GM12878 (cell line): ENCODE measurements at regions of chr14 and their contacts with region 1.

Region 1: DNA sequence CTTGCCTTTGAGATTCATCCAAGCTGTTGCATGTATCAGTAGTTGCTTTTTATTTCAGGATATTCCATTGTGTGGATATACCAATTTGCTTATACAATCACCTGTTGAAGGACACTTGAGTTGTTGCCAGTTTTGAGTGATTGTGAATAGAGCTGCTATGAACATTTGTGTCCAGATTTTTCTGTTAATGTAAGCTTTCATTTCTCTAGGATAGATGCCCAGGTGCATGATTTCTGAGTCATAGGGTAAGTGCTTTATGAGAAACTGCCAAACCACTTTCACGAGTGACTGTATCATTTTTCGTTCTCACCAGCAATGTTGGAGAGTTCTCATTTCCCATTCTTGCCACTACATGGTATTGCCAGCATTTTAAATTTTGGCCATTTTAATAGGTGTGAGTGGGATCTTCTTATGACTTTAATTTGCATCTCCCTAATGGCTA is 434.6 kb upstream of the RGS6 start:
- DNase-seq: peak; percentile 98
- ATAC-seq: peak; percentile 91
- H3K4me3 ChIP-seq: no peak overlapping the region
- H3K27ac ChIP-seq: peak overlapping the region; percentile 94
- H3K4me1 ChIP-seq: peaks cover 43% of the 10 kb centered on the region
- H3K27me3 ChIP-seq: no peaks in the 10 kb centered on the region
- CTCF ChIP-seq: no peak
- EP300 ChIP-seq: peak; percentile 99
- POLR2A ChIP-seq: no peak
- RAD21 ChIP-seq: no peak; the same call in none of the 2 replicates

Region 2: GRCh38 chr14:71355324-71356201 is 142.1 kb before region 1 on chr14:
- CTCF ChIA-PET with region 1: interaction called, 3 read pairs
- POLR2A ChIA-PET with region 1: interaction called, 4 read pairs
- RAD21 ChIA-PET with region 1: interaction called, 8 read pairs
- SMC1A ChIA-PET with region 1: interaction called, 10 read pairs
- in situ Hi-C with region 1: no loop called
- intact Hi-C with region 1: no loop called
- DNase-seq: no peak
- ATAC-seq: peak; percentile 45
- H3K4me3 ChIP-seq: peak overlapping the region; percentile 20; the same call in 1 of the 2 replicates
- H3K27ac ChIP-seq: peak overlapping the region; percentile 52
- H3K4me1 ChIP-seq: peaks cover 38% of the 10 kb centered on the region
- H3K27me3 ChIP-seq: no peaks in the 10 kb centered on the region
- CTCF ChIP-seq: no peak
- EP300 ChIP-seq: no peak
- POLR2A ChIP-seq: no peak
- RAD21 ChIP-seq: no peak

Region 3: DNA sequence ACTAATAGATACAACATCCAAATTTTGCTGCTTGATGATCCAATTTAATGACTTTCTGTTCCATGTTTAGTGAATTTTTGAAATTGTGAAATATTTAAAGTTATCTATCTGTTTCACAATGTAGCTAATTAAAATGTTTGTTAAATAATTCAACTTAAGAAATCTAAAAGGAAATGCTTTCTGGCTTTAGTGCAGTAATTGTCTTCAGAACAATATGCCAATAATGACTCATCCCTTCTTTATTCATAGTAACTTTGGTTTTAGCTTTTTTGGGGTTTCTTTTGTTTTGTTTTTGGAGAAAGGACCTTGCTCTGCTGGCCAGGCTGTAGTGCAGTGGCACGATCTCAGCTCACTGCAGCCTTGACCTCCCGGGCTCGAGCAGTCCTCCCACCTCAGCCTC is 44.7 kb before region 1 on chr14:
- CTCF ChIA-PET with region 1: interaction called, 3 read pairs
- POLR2A ChIA-PET with region 1: interaction called, 5 read pairs
- RAD21 ChIA-PET with region 1: interaction called, 17 read pairs
- SMC1A ChIA-PET with region 1: interaction called, 14 read pairs
- in situ Hi-C with region 1: no loop called
- intact Hi-C with region 1: no loop called
- DNase-seq: no peak
- ATAC-seq: peak; percentile 36
- H3K4me3 ChIP-seq: no peak overlapping the region
- H3K27ac ChIP-seq: no peak overlapping the region
- H3K4me1 ChIP-seq: no peaks in the 10 kb centered on the region
- H3K27me3 ChIP-seq: no peaks in the 10 kb centered on the region
- CTCF ChIP-seq: no peak
- EP300 ChIP-seq: no peak
- POLR2A ChIP-seq: no peak
- RAD21 ChIP-seq: no peak

Region 4: GRCh38 chr14:71478542-71478941 is 19.1 kb before region 1 on chr14:
- CTCF ChIA-PET with region 1: interaction called, 12 read pairs
- POLR2A ChIA-PET with region 1: interaction called, 25 read pairs
- RAD21 ChIA-PET with region 1: interaction called, 44 read pairs
- SMC1A ChIA-PET with region 1: interaction called, 74 read pairs
- in situ Hi-C with region 1: no loop called
- intact Hi-C with region 1: loop called (anchors 1 kb)
- DNase-seq: no peak
- ATAC-seq: peak; percentile 54
- H3K4me3 ChIP-seq: 0 out of 2 replicates have a peak overlapping the region, but pooled peaks have one; percentile 10
- H3K27ac ChIP-seq: peak overlapping the region; percentile 78
- H3K4me1 ChIP-seq: peaks cover 35% of the 10 kb centered on the region
- H3K27me3 ChIP-seq: no peaks in the 10 kb centered on the region
- CTCF ChIP-seq: no peak
- EP300 ChIP-seq: no peak
- POLR2A ChIP-seq: no peak
- RAD21 ChIP-seq: no peak

Region 5: DNA sequence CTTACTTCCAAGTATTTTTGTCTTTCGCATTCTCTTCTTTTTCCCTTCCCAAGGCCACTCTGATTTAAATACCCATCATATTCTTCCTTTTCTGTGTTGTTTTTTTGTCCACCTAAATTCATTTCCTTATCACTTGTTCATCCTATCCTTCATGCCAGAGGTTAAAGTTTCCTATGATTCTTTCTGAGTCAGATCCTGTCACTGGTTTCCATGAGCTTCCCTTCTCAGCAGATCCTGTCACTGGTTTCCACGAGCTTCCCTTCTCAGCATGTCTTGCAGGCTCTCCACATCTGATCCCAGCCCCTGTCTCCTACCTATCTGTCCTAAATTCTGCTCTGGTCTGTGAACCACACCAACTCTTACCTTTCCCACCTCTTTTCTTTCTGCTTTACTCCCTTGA is 122.7 kb after region 1 on chr14:
- CTCF ChIA-PET with region 1: interaction called, 3 read pairs
- POLR2A ChIA-PET with region 1: no interaction called
- RAD21 ChIA-PET with region 1: interaction called, 9 read pairs
- SMC1A ChIA-PET with region 1: interaction called, 11 read pairs
- in situ Hi-C with region 1: no loop called
- intact Hi-C with region 1: loop called (anchors 5 kb)
- DNase-seq: no peak
- ATAC-seq: no peak
- H3K4me3 ChIP-seq: no peak overlapping the region
- H3K27ac ChIP-seq: peak overlapping the region; percentile 28; the same call in 1 of the 2 replicates
- H3K4me1 ChIP-seq: peaks cover 11% of the 10 kb centered on the region; the same call in 1 of the 2 replicates
- H3K27me3 ChIP-seq: no peaks in the 10 kb centered on the region
- CTCF ChIP-seq: no peak
- EP300 ChIP-seq: no peak
- POLR2A ChIP-seq: no peak
- RAD21 ChIP-seq: no peak

Region 6: GRCh38 chr14:72169521-72169920 is 671.9 kb after region 1 on chr14:
- CTCF ChIA-PET with region 1: no interaction called
- POLR2A ChIA-PET with region 1: no interaction called
- RAD21 ChIA-PET with region 1: no interaction called
- SMC1A ChIA-PET with region 1: no interaction called
- in situ Hi-C with region 1: no loop called
- intact Hi-C with region 1: no loop called
- DNase-seq: no peak
- ATAC-seq: peak; percentile 49
- H3K4me3 ChIP-seq: no peak overlapping the region
- H3K27ac ChIP-seq: no peak overlapping the region
- H3K4me1 ChIP-seq: no peaks in the 10 kb centered on the region
- H3K27me3 ChIP-seq: no peaks in the 10 kb centered on the region
- CTCF ChIP-seq: no peak
- EP300 ChIP-seq: no peak
- POLR2A ChIP-seq: no peak
- RAD21 ChIP-seq: no peak